ENCODE measurements at regions of chr16 and their contacts with region 1.

Region 1: GRCh38 chr16:18959031-18959505 is 24.7 kb upstream of the TMC7 start:
- DNase-seq: no peak
- H3K4me3 Mint-ChIP-seq: no peak overlapping the region
- H3K27ac Mint-ChIP-seq: no peak overlapping the region
- H3K4me1 Mint-ChIP-seq: peaks cover 31% of the 10 kb centered on the region
- H3K27me3 Mint-ChIP-seq: no peaks in the 10 kb centered on the region
- CTCF ChIP-seq: no peak

Region 2: DNA sequence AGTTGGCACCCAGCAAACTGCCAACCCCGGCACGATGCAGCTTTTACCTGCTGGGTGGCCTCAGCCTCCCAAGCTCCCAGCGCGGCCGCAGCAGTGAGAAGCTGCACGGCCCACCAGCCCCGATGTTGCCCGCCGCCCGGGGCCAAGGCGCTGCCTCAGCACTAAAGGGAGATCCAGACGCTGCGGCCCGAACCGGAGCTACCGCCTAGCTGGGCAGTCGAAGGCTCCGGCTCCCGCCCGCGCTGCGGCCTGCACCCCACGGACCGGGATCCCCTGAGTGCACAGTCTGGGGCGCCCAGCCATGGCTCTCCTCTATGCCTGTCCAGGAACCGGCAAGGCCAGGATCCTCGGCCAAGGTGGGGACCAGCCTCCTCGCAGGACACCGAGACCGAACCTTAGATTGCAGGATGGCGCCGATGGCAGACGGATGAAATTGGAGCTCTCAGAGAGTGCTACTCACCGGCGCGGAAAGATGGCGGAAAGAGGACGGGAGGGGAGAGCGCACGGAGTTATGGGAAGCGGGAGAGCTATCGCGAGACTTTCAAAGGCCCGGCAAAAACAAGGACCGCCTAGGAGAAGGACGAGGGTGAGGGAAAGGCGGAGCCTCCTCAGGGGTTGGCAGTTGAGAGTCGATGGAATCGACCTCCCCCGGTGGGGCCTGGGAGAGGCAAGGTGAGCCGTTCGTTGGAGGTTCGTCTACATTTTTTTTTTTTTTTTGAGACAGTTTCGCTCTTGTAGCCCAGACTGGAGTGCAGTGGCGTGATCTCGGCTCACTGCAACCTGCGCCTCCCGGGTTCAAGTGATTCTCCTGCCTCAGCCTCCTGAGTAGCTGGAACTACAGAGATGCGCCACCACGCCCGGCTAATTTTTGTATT is 169.0 kb before region 1 on chr16 and contains the start of gene RPS15A:
- CTCF ChIA-PET with region 1: no interaction called
- POLR2A ChIA-PET with region 1: interaction called, 10 read pairs
- intact Hi-C with region 1: no loop called
- DNase-seq: peak; percentile 98
- H3K4me3 Mint-ChIP-seq: peak within 1 kb of the TSS; percentile 95
- H3K27ac Mint-ChIP-seq: peak within 1 kb of the TSS; percentile 87
- H3K4me1 Mint-ChIP-seq: peaks cover 28% of the 10 kb centered on the region
- H3K27me3 Mint-ChIP-seq: no peaks in the 10 kb centered on the region
- CTCF ChIP-seq: no peak
- total RNA-seq, gene RPS15A: 869 and 1,431 TPM in 2 replicates

Region 3: GRCh38 chr16:18816286-18816685 is 142.8 kb before region 1 on chr16:
- CTCF ChIA-PET with region 1: no interaction called
- POLR2A ChIA-PET with region 1: no interaction called
- intact Hi-C with region 1: no loop called
- DNase-seq: no peak
- H3K4me3 Mint-ChIP-seq: no peak overlapping the region
- H3K27ac Mint-ChIP-seq: no peak overlapping the region
- H3K4me1 Mint-ChIP-seq: no peaks in the 10 kb centered on the region
- H3K27me3 Mint-ChIP-seq: no peaks in the 10 kb centered on the region
- CTCF ChIP-seq: no peak

Region 4: GRCh38 chr16:18932243-18932981 is 26.7 kb before region 1 on chr16:
- CTCF ChIA-PET with region 1: interaction called, 33 read pairs
- POLR2A ChIA-PET with region 1: interaction called, 79 read pairs
- intact Hi-C with region 1: no loop called
- DNase-seq: peak; percentile 39
- H3K4me3 Mint-ChIP-seq: no peak overlapping the region
- H3K27ac Mint-ChIP-seq: peak overlapping the region; percentile 49
- H3K4me1 Mint-ChIP-seq: peaks cover 10% of the 10 kb centered on the region
- H3K27me3 Mint-ChIP-seq: no peaks in the 10 kb centered on the region
- CTCF ChIP-seq: no peak

Region 5: DNA sequence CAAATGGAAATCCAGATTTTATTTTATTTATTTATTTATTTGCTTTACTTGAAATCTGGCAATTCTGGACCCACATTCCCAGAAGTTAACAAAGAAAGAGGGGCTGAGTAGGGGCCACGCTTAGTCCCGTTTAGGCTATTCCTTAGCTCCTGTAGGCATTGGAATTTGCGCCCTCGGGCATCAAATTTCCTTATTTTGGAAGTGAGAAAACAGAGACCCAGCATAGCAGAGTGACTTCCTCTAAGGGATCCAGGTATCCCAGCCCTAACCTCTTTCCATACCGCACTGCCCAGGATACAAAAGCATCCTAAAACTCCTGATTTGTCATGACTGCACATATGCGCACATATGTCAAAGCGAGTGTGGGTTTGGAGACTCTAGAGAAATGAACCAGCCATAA is 13.8 kb before region 1 on chr16:
- CTCF ChIA-PET with region 1: interaction called, 26 read pairs
- POLR2A ChIA-PET with region 1: interaction called, 57 read pairs
- intact Hi-C with region 1: no loop called
- DNase-seq: no peak
- H3K4me3 Mint-ChIP-seq: no peak overlapping the region
- H3K27ac Mint-ChIP-seq: no peak overlapping the region
- H3K4me1 Mint-ChIP-seq: no peaks in the 10 kb centered on the region
- H3K27me3 Mint-ChIP-seq: no peaks in the 10 kb centered on the region
- CTCF ChIP-seq: no peak

Region 6: DNA sequence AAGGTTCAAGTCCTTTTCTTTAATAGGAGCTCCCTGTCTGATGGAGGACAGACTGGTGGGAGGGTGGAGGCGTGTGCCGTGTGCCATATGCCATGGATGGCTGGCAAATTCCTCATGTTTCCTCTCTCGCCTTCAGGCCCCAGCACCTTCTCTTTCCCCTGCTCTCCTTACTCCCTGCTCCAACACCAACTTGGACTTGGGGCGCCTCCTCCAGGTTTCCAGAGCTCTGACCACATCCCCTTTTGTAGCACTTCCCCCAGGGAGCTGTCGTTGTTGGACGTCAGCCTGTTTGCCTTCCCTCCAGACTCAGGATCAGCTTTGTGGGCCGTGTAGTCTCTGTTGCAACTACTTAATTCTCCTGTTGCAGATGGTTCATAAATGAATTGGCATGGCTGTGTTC is 55.4 kb after region 1 on chr16:
- CTCF ChIA-PET with region 1: no interaction called
- POLR2A ChIA-PET with region 1: no interaction called
- intact Hi-C with region 1: no loop called
- DNase-seq: peak; percentile 29
- H3K4me3 Mint-ChIP-seq: no peak overlapping the region
- H3K27ac Mint-ChIP-seq: no peak overlapping the region
- H3K4me1 Mint-ChIP-seq: peaks cover 4% of the 10 kb centered on the region
- H3K27me3 Mint-ChIP-seq: no peaks in the 10 kb centered on the region
- CTCF ChIP-seq: no peak

Region 7: GRCh38 chr16:19040400-19040799 is 81.3 kb after region 1 on chr16:
- CTCF ChIA-PET with region 1: no interaction called
- POLR2A ChIA-PET with region 1: no interaction called
- intact Hi-C with region 1: no loop called
- DNase-seq: no peak
- H3K4me3 Mint-ChIP-seq: no peak overlapping the region
- H3K27ac Mint-ChIP-seq: no peak overlapping the region
- H3K4me1 Mint-ChIP-seq: no peaks in the 10 kb centered on the region
- H3K27me3 Mint-ChIP-seq: no peaks in the 10 kb centered on the region
- CTCF ChIP-seq: no peak

Region 8: GRCh38 chr16:19118938-19119431 is 159.9 kb after region 1 on chr16:
- CTCF ChIA-PET with region 1: no interaction called
- POLR2A ChIA-PET with region 1: interaction called, 11 read pairs
- intact Hi-C with region 1: no loop called
- DNase-seq: peak; percentile 90
- H3K4me3 Mint-ChIP-seq: peak overlapping the region; percentile 76
- H3K27ac Mint-ChIP-seq: peak overlapping the region; percentile 93
- H3K4me1 Mint-ChIP-seq: peaks cover 43% of the 10 kb centered on the region
- H3K27me3 Mint-ChIP-seq: no peaks in the 10 kb centered on the region
- CTCF ChIP-seq: no peak

Measured in MCF 10A (cell line).